ENCODE measurements at regions of chr18 and their contacts with region 1.

Region 1: DNA sequence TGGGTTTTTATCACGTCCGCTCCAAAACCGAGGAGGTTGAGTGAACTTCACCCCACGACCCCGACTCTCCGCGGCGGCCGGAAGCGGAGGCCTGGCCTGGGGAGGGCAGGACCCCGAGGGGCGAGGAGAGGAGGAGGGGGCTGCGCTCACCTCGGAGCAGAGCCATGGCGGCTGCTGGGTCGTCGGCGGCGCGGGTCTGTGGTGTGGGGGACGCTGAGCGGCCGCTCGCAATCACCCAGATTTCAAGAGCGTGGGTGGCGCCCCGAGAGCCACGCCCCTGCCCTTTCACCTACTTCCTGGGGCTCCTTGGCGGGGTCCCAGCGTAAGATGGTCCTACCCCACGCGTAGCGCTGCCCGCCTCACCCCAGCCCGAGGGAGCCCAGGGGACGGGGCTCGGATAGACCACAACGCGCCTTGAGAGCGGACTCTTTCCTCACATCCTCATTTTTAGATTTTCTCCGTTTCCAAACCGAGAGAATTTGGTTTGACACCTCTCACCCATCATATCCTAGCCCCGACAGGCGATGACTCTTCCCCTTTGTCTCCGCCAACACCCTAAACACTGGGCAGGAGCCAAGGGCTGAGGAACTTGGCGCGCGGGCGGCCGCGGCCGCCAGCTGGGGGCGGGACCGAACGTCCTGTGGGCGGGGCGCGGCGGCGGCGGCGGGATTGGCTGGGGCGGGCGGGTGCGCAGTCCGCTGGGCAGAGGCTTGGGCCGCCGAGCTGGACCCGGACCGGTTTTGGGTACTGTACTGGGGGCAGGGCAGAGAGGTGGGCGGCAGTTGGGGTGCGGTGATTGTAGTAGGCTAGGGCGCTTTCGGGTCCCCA is at the start of gene ACAA2:
- DNase-seq: peak; percentile 87
- H3K4me3 ChIP-seq: peak within 1 kb of the TSS; percentile 61 to 96 (median 92)
- H3K27ac ChIP-seq: peak within 1 kb of the TSS; percentile 92
- H3K4me1 ChIP-seq: peaks cover 12% of the 10 kb centered on the region
- H3K27me3 ChIP-seq: no peaks in the 10 kb centered on the region
- CTCF ChIP-seq: no peak
- total RNA-seq, gene ACAA2: 42.2 to 45.9 TPM

Region 2: GRCh38 chr18:49834258-49834657 is 20.7 kb after region 1 on chr18:
- CTCF ChIA-PET with region 1: no interaction called
- dilution Hi-C with region 1: no loop called
- in situ Hi-C with region 1: no loop called
- intact Hi-C with region 1: loop called (anchors 2 kb)
- DNase-seq: no peak
- H3K4me3 ChIP-seq: no peak overlapping the region
- H3K27ac ChIP-seq: no peak overlapping the region
- H3K4me1 ChIP-seq: peaks cover 17% of the 10 kb centered on the region
- H3K27me3 ChIP-seq: no peaks in the 10 kb centered on the region
- CTCF ChIP-seq: no peak

Region 3: GRCh38 chr18:49849331-49850217 is 36.0 kb after region 1 on chr18:
- CTCF ChIA-PET with region 1: no interaction called
- dilution Hi-C with region 1: no loop called
- in situ Hi-C with region 1: no loop called
- intact Hi-C with region 1: loop called (anchors 1 kb)
- DNase-seq: peak; percentile 98
- H3K4me3 ChIP-seq: peak overlapping the region in 2 of 3 experiments; percentile 8 to 24
- H3K27ac ChIP-seq: peak overlapping the region; percentile 91
- H3K4me1 ChIP-seq: peaks cover 25% of the 10 kb centered on the region
- H3K27me3 ChIP-seq: no peaks in the 10 kb centered on the region
- CTCF ChIP-seq: no peak